Right ventricle myocardium inferior (tissue), 1 donor: ENCODE measurements at regions of chr10 and their contacts with region 1.

Region 1: DNA sequence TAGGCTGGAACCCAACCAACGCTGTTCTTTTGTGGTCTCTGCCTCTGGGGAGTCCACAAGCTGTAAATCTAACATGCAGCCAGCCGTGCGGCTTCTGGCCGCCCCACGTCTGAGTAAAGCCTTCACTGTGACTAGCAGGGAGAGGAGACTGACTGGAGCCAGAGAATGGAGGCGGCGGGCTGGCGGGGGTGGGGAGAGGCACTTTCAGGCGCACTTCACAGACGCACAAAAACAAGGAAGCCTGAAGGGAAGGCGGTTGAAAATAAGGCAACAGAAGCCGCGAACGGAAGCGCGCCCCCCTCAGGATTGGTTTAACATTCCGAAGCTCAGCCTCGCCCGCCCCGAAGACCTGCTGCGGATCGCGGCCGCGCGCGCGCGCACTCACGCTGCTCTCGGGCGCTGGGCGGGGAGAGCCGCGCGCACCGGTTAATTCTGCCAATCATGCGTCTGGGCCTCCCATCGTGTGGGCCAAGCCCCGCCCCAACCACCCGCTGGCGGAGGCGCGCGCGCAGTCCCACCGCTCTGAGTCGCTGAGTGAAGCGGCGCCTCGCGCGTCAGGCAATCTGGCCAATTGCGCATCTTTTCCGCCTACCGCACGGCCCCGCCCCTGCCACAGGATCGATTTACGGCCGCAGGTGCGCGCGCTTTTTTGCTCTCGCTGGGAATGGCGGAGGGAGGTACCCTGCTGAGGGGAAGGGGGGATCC is at the start of gene SFR1:
- DNase-seq: peak; percentile 99
- ATAC-seq: peak; percentile 97
- total RNA-seq, gene SFR1: 5.7 TPM

Region 2: DNA sequence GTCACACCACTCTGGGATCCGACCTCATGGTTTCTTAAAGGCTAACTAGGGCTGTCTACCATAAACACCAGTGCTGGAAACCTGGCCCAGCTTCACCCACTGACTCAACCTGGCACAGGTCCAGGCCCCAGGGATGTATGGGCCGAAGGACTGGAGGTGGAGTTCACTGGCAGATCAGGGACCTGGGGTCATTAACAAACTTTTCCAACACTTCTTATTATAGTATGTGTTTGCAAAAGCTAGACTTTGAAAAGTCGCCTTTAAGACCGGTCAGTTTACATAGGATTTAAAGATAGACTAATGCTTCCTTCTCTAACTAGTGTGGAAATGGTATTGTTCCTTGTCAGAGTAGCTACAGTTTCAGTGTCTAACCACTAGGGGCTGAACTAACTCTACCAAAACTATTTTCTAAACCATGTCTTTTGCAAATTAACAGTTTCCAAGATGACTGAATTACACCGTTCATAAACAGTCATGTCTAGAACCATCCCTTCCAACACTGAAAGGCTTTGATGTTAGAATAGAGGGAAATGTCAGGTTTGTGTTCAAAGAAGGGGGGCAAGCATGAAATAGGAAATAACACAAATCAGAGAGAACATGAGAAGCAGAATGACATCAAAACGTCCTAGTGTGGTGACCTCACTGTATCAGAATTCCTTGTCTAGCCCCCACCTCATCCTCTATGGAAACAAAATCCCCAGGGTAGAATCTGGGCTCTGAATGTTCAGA is 233.4 kb before region 1 on chr10:
- intact Hi-C with region 1: loop called (anchors 2 kb)
- DNase-seq: no peak
- ATAC-seq: peak; percentile 52

Region 3: GRCh38 chr10:103966671-103967447 is 154.8 kb before region 1 on chr10 and contains the start of gene SLK:
- intact Hi-C with region 1: loop called (anchors 5 kb)
- DNase-seq: peak; percentile 93
- ATAC-seq: peak; percentile 98
- total RNA-seq, gene SLK: 28.9 TPM

Region 4: GRCh38 chr10:104045151-104046089 is 76.3 kb before region 1 on chr10:
- intact Hi-C with region 1: loop called (anchors 5 kb)
- DNase-seq: no peak
- ATAC-seq: peak; percentile 48

Region 5: GRCh38 chr10:104197364-104197763 is 75.7 kb after region 1 on chr10:
- intact Hi-C with region 1: no loop called
- DNase-seq: no peak
- ATAC-seq: no peak

Region 6: DNA sequence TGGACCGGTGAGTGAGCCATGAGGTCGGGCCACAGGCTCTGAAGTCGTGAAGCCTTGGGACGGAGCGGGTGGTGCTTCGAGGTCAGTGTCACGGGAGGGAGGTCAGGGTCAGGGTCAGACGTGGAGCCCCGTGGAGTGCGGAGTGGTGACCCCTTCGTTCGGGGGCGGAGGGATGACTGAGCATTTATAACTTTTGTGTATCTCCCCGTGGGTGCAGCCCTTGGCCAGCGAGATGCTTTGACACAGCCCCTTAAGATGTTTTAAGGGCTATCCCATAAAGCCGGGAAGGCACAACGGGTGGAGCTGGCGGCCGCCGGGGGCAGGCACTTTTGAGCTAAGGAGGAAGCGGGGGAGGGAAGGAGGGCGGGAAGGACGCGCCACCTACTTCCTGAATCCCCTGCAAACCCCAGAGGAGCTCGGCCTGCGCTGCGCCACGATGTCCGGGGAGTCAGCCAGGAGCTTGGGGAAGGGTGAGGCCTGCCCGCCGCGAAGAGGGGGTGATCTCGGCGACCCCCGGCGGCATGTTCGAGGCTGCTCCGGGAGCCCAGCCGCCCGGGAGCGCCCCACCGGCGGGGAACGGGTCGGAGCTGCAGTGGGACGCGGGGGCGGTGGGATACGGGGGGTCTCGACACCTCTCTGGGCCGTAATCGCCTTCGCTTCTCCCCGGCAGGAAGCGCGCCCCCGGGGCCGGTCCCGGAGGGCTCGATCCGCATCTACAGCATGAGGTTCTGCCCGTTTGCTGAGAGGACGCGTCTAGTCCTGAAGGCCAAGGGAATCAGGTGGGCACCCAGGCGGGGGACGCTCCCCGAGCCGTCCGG is 133.0 kb after region 1 on chr10 and contains the start of gene GSTO1:
- intact Hi-C with region 1: loop called (anchors 10 kb)
- DNase-seq: peak; percentile 92
- ATAC-seq: peak; percentile 93
- total RNA-seq, gene GSTO1: 174 TPM